ENCODE measurements at regions of chr19 and their contacts with region 1.

Region 1: GRCh38 chr19:11766597-11767591 is at the start of gene ZNF441:
- DNase-seq: peak; percentile 91
- ATAC-seq: peak; percentile 95
- H3K4me3 ChIP-seq: peak within 1 kb of the TSS; percentile 32 to 94 (median 87)
- H3K4me3 Mint-ChIP-seq: peak within 1 kb of the TSS; percentile 99
- H3K27ac ChIP-seq: peak within 1 kb of the TSS; percentile 90 to 94
- H3K27ac Mint-ChIP-seq: peak within 1 kb of the TSS; percentile 99
- H3K4me1 ChIP-seq: peaks cover 16 to 22% of the 10 kb centered on the region in 2 donors
- H3K4me1 Mint-ChIP-seq: peaks cover 23% of the 10 kb centered on the region
- H3K27me3 ChIP-seq: no peaks in the 10 kb centered on the region
- H3K27me3 Mint-ChIP-seq: peaks cover 4% of the 10 kb centered on the region
- CTCF ChIP-seq: no peak
- total RNA-seq, gene ZNF441: 43.5 and 45.3 TPM in 2 replicates

Region 2: DNA sequence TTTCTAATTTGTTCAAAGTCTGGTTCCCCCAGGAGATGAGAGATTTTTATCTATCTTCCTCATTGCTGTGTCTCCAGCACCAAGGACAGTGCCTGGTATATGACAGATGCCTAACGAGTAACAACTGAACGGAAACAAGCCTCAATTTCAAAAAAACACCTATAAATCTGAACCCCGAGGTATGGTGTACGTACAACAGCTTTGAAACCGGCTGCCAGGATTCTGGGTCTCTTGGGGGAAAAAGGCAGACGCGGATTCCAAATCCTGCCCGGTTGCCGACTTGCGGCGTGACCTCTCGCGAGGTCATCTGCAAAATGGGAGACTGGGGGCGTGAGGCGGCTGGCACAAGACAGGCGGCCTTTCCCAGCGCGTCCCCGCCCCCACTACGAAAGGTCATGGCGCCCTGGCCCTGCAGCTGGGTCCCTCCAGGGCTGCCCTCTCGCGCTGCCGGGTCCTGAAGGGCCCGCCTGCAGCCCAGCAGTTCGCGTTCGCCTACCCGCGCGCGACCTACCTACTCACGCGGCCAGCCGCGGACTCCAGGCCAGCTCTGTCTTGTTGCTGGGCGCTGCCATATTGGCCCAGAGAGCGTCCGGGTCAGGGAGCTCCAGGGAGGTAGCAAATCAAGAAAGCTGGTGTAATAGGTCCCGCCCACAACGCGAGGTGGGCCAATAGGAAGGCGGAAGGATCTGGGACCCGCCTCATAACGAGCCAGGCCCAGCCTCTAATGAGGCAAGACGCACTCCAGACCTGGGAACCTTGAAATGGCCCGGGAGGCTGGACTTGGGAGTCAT is 238.1 kb before region 1 on chr19 and contains the start of gene ECSIT:
- CTCF ChIA-PET with region 1: no interaction called
- POLR2A ChIA-PET with region 1: no interaction called
- intact Hi-C with region 1: loop called (anchors 2 kb)
- DNase-seq: peak; percentile 95
- ATAC-seq: peak; percentile 99
- H3K4me3 ChIP-seq: peak within 1 kb of the TSS; percentile 45 to 83 (median 79)
- H3K4me3 Mint-ChIP-seq: peak within 1 kb of the TSS; percentile 98
- H3K27ac ChIP-seq: peak within 1 kb of the TSS; percentile 58 to 79
- H3K27ac Mint-ChIP-seq: peak within 1 kb of the TSS; percentile 95
- H3K4me1 ChIP-seq: peaks cover 7 to 19% of the 10 kb centered on the region in 2 donors
- H3K4me1 Mint-ChIP-seq: peaks cover 16% of the 10 kb centered on the region
- H3K27me3 ChIP-seq: no peaks in the 10 kb centered on the region
- H3K27me3 Mint-ChIP-seq: no peaks in the 10 kb centered on the region
- CTCF ChIP-seq: no peak
- total RNA-seq, gene ECSIT: 45.6 and 56.7 TPM in 2 replicates

Region 3: GRCh38 chr19:11597202-11598102 is 169.4 kb before region 1 on chr19 and contains the start of gene ZNF627:
- CTCF ChIA-PET with region 1: no interaction called
- POLR2A ChIA-PET with region 1: no interaction called
- intact Hi-C with region 1: loop called (anchors 2 kb)
- DNase-seq: peak; percentile 98
- ATAC-seq: peak; percentile 99
- H3K4me3 ChIP-seq: peak within 1 kb of the TSS; percentile 59 to 95 (median 85)
- H3K4me3 Mint-ChIP-seq: peak within 1 kb of the TSS; percentile 96
- H3K27ac ChIP-seq: peak within 1 kb of the TSS; percentile 87 to 88
- H3K27ac Mint-ChIP-seq: peak within 1 kb of the TSS; percentile 94
- H3K4me1 ChIP-seq: peaks cover 14 to 27% of the 10 kb centered on the region in 2 donors
- H3K4me1 Mint-ChIP-seq: peaks cover 34% of the 10 kb centered on the region
- H3K27me3 ChIP-seq: no peaks in the 10 kb centered on the region
- H3K27me3 Mint-ChIP-seq: no peaks in the 10 kb centered on the region
- CTCF ChIP-seq: no peak
- total RNA-seq, gene ZNF627: 24.7 and 26.2 TPM in 2 replicates

Region 4: DNA sequence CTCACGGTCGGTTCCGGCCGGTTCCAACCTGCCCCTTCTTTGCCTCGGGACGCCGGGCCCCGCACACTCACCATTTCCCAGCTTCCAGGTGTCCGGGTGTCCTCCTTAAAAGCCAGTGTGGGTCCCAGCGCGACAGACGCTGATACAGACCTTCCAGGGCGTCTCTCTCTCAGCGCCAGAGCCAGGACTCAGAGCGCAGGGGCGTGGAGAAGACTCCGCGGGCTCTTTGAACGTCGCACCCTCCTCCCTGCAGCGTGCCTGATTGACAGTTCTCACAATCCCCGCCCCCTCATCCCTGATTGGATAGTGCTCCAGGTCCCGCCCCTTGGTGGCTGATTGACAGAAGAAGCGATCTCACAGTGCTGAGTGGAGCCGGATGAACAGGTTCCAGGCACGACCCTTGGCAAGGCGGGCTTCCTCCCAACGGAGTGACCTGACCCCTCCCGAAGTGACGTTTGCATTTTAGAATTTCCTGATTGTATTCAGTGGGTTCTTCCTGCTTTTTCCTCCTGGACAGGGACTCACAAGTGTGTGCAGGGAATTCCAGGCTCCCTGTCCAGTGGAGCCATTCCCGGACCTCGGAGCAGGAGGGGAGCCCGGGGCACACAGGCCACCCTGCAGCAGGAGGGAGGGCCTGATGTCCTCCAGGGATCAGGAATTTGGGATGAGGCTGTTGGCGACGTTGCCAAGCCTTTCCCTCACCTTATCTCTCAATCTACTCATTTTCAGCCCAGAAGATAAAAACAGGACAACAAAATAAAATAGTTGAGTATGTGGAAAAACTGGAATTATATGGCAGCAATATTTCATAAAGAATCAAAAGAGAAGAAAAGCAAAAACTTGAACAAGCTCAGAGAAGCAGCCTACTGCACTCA is 27.9 kb before region 1 on chr19 and contains the start of gene ZNF823:
- CTCF ChIA-PET with region 1: interaction called, 3 read pairs
- POLR2A ChIA-PET with region 1: interaction called, 3 read pairs
- intact Hi-C with region 1: loop called (anchors 1 kb)
- DNase-seq: peak; percentile 94
- ATAC-seq: peak; percentile 99
- H3K4me3 ChIP-seq: peak within 1 kb of the TSS; percentile 36 to 92 (median 83)
- H3K4me3 Mint-ChIP-seq: peak within 1 kb of the TSS; percentile 99
- H3K27ac ChIP-seq: peak within 1 kb of the TSS in 1 of 2 donors; percentile 38
- H3K27ac Mint-ChIP-seq: peak within 1 kb of the TSS; percentile 89
- H3K4me1 ChIP-seq: peaks cover 15 to 19% of the 10 kb centered on the region in 2 donors
- H3K4me1 Mint-ChIP-seq: peaks cover 26% of the 10 kb centered on the region
- H3K27me3 ChIP-seq: no peaks in the 10 kb centered on the region
- H3K27me3 Mint-ChIP-seq: peaks cover 5% of the 10 kb centered on the region
- CTCF ChIP-seq: no peak
- total RNA-seq, gene ZNF823: 4.2 and 5.1 TPM in 2 replicates

Region 5: DNA sequence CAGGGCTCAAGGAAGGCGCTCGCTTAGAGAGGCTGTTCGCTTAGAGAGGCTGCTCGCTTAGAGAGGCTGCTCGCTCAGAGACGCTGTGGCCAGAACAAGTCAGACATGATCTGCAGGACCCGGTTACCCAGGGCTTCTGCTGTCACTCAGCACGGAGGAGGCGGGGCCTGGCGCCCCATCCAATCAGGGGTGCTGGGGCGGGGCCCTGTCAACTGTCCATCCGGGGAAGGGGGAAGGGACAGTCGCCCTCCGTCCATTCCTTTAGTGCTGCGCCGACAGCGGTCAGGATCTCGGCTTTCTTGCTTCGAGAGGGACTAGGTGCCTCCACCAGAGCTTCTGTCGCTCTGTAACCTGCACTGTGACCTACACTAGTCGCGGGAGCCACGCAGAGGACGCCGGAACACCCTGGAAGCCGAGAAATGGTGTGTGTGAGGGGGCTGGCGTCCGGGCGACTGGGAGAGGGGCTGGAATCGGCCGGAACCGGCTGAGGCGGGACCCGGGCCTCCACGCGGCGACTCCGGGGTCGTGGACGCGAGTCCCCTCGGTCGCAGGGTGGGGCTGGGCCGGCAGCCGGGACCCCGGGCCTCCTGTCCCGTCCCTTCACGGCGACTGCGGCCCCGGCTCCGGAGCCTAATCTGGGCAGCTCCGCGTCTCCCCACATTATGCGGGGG is 47.3 kb after region 1 on chr19 and contains the start of gene ZNF440:
- CTCF ChIA-PET with region 1: interaction called, 3 read pairs
- POLR2A ChIA-PET with region 1: no interaction called
- intact Hi-C with region 1: loop called (anchors 1 kb)
- DNase-seq: peak; percentile 85
- ATAC-seq: peak; percentile 99
- H3K4me3 ChIP-seq: peak within 1 kb of the TSS; percentile 75 to 94 (median 82)
- H3K4me3 Mint-ChIP-seq: peak within 1 kb of the TSS; percentile 91
- H3K27ac ChIP-seq: peak within 1 kb of the TSS; percentile 39 to 66
- H3K27ac Mint-ChIP-seq: peak within 1 kb of the TSS; percentile 85
- H3K4me1 ChIP-seq: peaks cover 4 to 14% of the 10 kb centered on the region in 2 donors
- H3K4me1 Mint-ChIP-seq: peaks cover 29% of the 10 kb centered on the region
- H3K27me3 ChIP-seq: no peaks in the 10 kb centered on the region
- H3K27me3 Mint-ChIP-seq: no peaks in the 10 kb centered on the region
- CTCF ChIP-seq: no peak
- total RNA-seq, gene ZNF440: 22.4 and 23.4 TPM in 2 replicates

Region 6: DNA sequence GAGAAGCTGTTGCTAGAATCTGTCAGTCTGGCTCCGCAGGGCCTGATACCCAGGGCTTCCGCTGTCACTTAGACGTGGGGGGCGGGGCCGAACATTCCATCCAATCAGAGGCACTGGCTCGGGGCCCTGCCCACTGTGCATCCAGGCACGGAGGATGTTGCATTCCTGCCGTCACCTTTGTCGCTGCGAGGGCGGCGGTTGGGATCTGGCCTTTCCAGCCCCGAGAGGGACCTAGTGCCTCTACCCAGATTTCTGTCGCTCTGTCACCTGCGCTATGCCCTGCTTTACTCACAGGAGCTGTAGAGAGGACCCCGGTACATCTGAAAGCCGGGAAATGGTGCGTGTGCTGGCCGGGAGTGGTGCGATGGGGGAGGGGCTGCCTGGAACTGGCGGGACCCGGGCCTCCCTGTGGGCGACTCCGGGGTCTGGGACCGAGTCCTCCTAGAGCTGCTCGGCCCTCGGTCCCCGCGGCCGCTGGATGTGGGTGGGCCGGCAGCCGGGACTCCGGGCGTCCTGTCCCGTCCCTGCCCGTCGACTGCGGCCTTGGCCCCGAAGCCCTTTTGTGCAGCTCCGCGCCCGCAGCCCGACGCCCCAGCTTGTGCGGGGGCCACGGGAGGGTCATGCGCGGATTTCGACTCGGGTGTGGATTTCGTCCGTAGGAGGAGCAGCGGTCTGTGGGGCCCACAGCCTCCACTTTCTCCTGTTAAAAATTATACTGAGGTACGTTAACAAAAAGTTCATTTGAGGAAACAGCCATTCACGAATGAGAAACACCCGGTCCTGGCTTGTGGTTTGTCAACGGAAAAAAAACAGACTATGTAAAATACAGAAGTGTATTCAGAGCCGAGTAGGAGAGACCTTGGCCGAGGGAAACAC is 81.9 kb after region 1 on chr19 and contains the start of gene ZNF439:
- CTCF ChIA-PET with region 1: interaction called, 4 read pairs
- POLR2A ChIA-PET with region 1: no interaction called
- intact Hi-C with region 1: loop called (anchors 2 kb)
- DNase-seq: peak; percentile 93
- ATAC-seq: peak; percentile 97
- H3K4me3 ChIP-seq: peak within 1 kb of the TSS; percentile 57 to 85 (median 83)
- H3K4me3 Mint-ChIP-seq: peak within 1 kb of the TSS; percentile 90
- H3K27ac ChIP-seq: peak within 1 kb of the TSS; percentile 71 to 72
- H3K27ac Mint-ChIP-seq: peak within 1 kb of the TSS; percentile 96
- H3K4me1 ChIP-seq: peaks cover 20 to 24% of the 10 kb centered on the region in 2 donors
- H3K4me1 Mint-ChIP-seq: peaks cover 29% of the 10 kb centered on the region
- H3K27me3 ChIP-seq: no peaks in the 10 kb centered on the region
- H3K27me3 Mint-ChIP-seq: no peaks in the 10 kb centered on the region
- CTCF ChIP-seq: no peak
- total RNA-seq, gene ZNF439: 48.6 and 52.3 TPM in 2 replicates

Region 7: GRCh38 chr19:12994701-12995595 is 1228.1 kb after region 1 on chr19 and contains the start of gene NFIX:
- CTCF ChIA-PET with region 1: no interaction called
- POLR2A ChIA-PET with region 1: no interaction called
- intact Hi-C with region 1: loop called (anchors 5 kb)
- DNase-seq: peak; percentile 76
- ATAC-seq: peak; percentile 72
- H3K4me3 ChIP-seq: peak within 1 kb of the TSS; percentile 31 to 65 (median 60)
- H3K4me3 Mint-ChIP-seq: peak within 1 kb of the TSS; percentile 98
- H3K27ac ChIP-seq: no peak within 1 kb of the TSS
- H3K27ac Mint-ChIP-seq: peak within 1 kb of the TSS; percentile 88
- H3K4me1 ChIP-seq: peaks cover 10 to 11% of the 10 kb centered on the region in 2 donors
- H3K4me1 Mint-ChIP-seq: peaks cover 17% of the 10 kb centered on the region
- H3K27me3 ChIP-seq: peaks cover 0 to 24% (median 4%) of the 10 kb centered on the region in 4 experiments
- H3K27me3 Mint-ChIP-seq: peaks cover 24% of the 10 kb centered on the region
- CTCF ChIP-seq: no peak
- total RNA-seq, gene NFIX: 4.8 and 5.6 TPM in 2 replicates